ENCODE measurements at regions of chrX and their contacts with region 1.

Region 1: DNA sequence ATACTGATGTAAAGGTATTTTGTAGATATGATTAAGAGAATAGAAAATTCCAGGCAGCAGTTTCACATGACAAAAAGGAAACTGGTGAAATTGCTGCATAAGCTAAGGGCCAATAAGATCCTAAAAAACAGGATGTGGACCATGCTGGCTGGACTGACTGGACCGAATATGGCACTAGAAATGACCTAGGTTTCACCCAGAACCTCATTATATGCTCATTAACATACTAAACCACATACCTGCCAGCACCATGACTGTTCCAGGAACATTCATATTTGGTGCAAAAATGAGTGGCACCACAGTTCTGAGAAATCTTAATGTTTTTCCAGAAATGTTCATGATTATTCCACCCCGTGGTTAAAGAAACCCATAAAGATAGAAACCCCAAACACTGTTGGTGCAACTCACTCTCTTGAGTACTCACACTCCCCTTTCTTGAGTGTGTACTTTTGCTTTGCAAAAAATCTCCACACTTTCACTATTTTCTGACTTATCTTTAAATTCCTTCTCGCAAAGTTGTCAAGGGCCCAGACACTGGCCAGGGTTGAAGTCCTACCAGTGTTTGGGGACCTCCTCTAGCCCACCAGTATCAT is 74.0 kb downstream of the FANCB start:
- DNase-seq: peak; percentile 14
- ATAC-seq: peak; percentile 83
- H3K4me3 Mint-ChIP-seq: no peak overlapping the region
- H3K27ac Mint-ChIP-seq: no peak overlapping the region
- H3K4me1 Mint-ChIP-seq: peaks cover 22% of the 10 kb centered on the region
- H3K27me3 Mint-ChIP-seq: peaks cover 2% of the 10 kb centered on the region

Region 2: GRCh38 chrX:14872851-14873675 is 74.2 kb after region 1 on chrX and contains the starts of genes FANCB and MOSPD2:
- CTCF ChIA-PET with region 1: no interaction called
- POLR2A ChIA-PET with region 1: no interaction called
- intact Hi-C with region 1: loop called in 1 of 2 experiments (anchors 1 kb)
- DNase-seq: peak; percentile 95
- ATAC-seq: peak; percentile 96
- H3K4me3 Mint-ChIP-seq: peak within 1 kb of the TSS; percentile 78
- H3K27ac Mint-ChIP-seq: peak within 1 kb of the TSS; percentile 76
- H3K4me1 Mint-ChIP-seq: peaks cover 17% of the 10 kb centered on the region
- H3K27me3 Mint-ChIP-seq: no peaks in the 10 kb centered on the region
- total RNA-seq, gene FANCB: 14.7 to 15.4 TPM
- total RNA-seq, gene MOSPD2: 18.9 to 24.5 TPM

Region 3: GRCh38 chrX:15033917-15034316 is 235.0 kb after region 1 on chrX:
- CTCF ChIA-PET with region 1: no interaction called
- POLR2A ChIA-PET with region 1: no interaction called
- intact Hi-C with region 1: loop called in 1 of 2 experiments (anchors 10 kb)
- DNase-seq: no peak
- ATAC-seq: peak; percentile 77
- H3K4me3 Mint-ChIP-seq: no peak overlapping the region
- H3K27ac Mint-ChIP-seq: no peak overlapping the region
- H3K4me1 Mint-ChIP-seq: peaks cover 9% of the 10 kb centered on the region
- H3K27me3 Mint-ChIP-seq: no peaks in the 10 kb centered on the region

Region 4: DNA sequence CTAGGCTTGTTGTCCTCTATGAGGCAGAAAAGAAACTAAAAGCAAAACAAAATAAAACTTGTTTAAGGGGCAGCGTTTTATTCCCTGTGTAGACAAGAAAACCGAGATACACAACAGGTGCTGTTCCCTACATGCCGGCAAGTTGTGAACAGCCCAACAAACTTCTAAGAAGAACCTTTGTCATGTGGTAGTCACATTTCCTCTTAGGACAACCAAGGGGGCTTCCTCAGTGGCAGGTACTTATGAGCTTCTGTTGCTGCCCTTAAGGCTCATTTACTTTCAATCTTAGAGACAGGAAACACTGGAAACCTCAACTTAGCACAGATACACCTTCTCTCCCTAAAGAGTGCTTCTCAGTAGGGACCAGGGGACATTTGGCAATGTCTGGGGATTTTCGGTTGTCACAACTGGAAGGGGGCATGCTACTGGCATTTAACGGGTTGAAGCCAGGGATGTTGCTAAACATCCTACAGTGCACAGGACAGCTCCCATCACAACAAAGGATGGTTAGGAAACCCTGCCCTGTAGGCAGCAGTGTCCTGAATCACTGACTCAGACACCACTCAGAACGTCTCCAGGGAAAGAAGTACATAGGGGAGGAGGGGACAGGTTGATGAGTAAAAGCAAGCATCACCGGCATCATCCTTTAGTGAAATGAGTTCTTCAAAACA is 360.0 kb after region 1 on chrX:
- CTCF ChIA-PET with region 1: no interaction called
- POLR2A ChIA-PET with region 1: no interaction called
- intact Hi-C with region 1: loop called (anchors 5 to 10 kb)
- DNase-seq: peak; percentile 44
- ATAC-seq: peak; percentile 96
- H3K4me3 Mint-ChIP-seq: peak overlapping the region; percentile 34
- H3K27ac Mint-ChIP-seq: peak overlapping the region; percentile 69
- H3K4me1 Mint-ChIP-seq: peaks cover 20% of the 10 kb centered on the region
- H3K27me3 Mint-ChIP-seq: peaks cover 7% of the 10 kb centered on the region

Region 5: GRCh38 chrX:15242899-15243555 is 444.1 kb after region 1 on chrX:
- CTCF ChIA-PET with region 1: no interaction called
- POLR2A ChIA-PET with region 1: no interaction called
- intact Hi-C with region 1: loop called in 1 of 2 experiments (anchors 5 kb)
- DNase-seq: peak; percentile 52
- ATAC-seq: no peak
- H3K4me3 Mint-ChIP-seq: no peak overlapping the region
- H3K27ac Mint-ChIP-seq: no peak overlapping the region
- H3K4me1 Mint-ChIP-seq: peaks cover 9% of the 10 kb centered on the region
- H3K27me3 Mint-ChIP-seq: no peaks in the 10 kb centered on the region

Region 6: GRCh38 chrX:15299941-15300851 is 501.3 kb after region 1 on chrX:
- CTCF ChIA-PET with region 1: no interaction called
- POLR2A ChIA-PET with region 1: no interaction called
- intact Hi-C with region 1: no loop called
- DNase-seq: no peak
- ATAC-seq: no peak
- H3K4me3 Mint-ChIP-seq: no peak overlapping the region
- H3K27ac Mint-ChIP-seq: no peak overlapping the region
- H3K4me1 Mint-ChIP-seq: peaks cover 2% of the 10 kb centered on the region
- H3K27me3 Mint-ChIP-seq: peaks cover 1% of the 10 kb centered on the region